ENCODE measurements at regions of chr7 and their contacts with region 1.

Region 1: GRCh38 chr7:37208528-37208927 is 240.1 kb downstream of the ELMO1 start:
- DNase-seq: peak in 1 of 2 donors; percentile 80
- ATAC-seq: peak; percentile 87 to 93 (median 90)
- H3K4me3 ChIP-seq: no peak overlapping the region
- H3K27ac ChIP-seq: peak overlapping the region; percentile 14 to 78 (median 58)
- H3K4me1 ChIP-seq: peaks cover 0 to 45% (median 28%) of the 10 kb centered on the region in 9 donors
- H3K27me3 ChIP-seq: no peaks in the 10 kb centered on the region
- CTCF ChIP-seq: peak; percentile 35 to 85 (median 68)

Region 2: GRCh38 chr7:37016064-37016878 is 192.3 kb before region 1 on chr7:
- intact Hi-C with region 1: no loop called
- DNase-seq: no peak
- ATAC-seq: no peak
- H3K4me3 ChIP-seq: no peak overlapping the region
- H3K27ac ChIP-seq: no peak overlapping the region
- H3K4me1 ChIP-seq: peaks cover 0 to 26% (median 6%) of the 10 kb centered on the region in 9 donors
- H3K27me3 ChIP-seq: no peaks in the 10 kb centered on the region
- CTCF ChIP-seq: no peak

Region 3: DNA sequence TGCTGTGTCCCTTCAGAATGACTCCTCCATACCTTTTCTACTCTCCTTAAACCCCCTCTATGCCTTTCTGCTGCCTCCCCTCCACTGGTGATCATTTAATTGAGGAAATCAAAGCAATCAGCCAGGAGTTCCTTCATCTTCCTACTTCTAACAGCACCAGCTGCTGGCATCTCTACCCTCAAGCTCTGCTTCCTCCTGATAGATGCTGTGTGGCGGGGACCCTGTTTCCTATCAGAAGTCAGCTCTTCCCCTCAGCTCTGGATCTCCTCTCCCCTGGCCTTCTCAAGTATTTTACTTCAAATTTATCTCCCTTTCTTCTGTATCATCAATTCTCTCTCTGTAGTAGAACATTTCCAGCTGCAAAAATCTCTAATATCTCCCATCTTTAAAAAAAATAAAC is 56.5 kb after region 1 on chr7:
- intact Hi-C with region 1: loop called in 1 of 10 experiments (anchors 10 kb)
- DNase-seq: no peak
- ATAC-seq: no peak
- H3K4me3 ChIP-seq: no peak overlapping the region
- H3K27ac ChIP-seq: no peak overlapping the region
- H3K4me1 ChIP-seq: peaks cover 0 to 35% (median 13%) of the 10 kb centered on the region in 9 donors
- H3K27me3 ChIP-seq: no peaks in the 10 kb centered on the region
- CTCF ChIP-seq: no peak

Region 4: DNA sequence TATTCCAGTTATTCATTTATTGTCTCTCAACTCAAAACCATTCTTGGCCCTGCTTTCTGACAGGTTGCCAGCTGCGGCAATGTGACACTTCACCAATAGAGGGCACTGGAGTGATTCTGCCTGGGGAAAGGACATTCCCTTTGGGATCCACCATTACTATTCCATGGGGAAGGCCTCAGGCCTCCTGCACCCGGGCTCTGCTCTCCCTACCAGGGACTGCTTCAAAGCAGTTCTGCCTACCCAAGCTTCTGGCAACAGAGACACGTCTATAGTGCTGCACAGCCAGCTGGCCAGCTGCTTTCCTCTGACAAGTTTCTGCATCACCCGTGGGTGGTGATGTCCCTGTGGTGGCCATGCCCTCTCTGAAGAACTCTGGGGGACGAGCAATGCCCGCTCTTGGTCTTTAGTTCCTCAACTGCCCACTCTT is 76.3 kb after region 1 on chr7:
- intact Hi-C with region 1: loop called in 2 of 10 experiments (anchors 5 kb)
- DNase-seq: peak; percentile 54 to 61
- ATAC-seq: peak in 6 of 8 donors; percentile 14 to 67 (median 52)
- H3K4me3 ChIP-seq: no peak overlapping the region
- H3K27ac ChIP-seq: peak overlapping the region in 7 of 10 donors; percentile 13 to 45 (median 19)
- H3K4me1 ChIP-seq: peaks cover 4 to 78% (median 56%) of the 10 kb centered on the region in 9 donors
- H3K27me3 ChIP-seq: no peaks in the 10 kb centered on the region
- CTCF ChIP-seq: peak; percentile 59 to 84 (median 77)

Region 5: DNA sequence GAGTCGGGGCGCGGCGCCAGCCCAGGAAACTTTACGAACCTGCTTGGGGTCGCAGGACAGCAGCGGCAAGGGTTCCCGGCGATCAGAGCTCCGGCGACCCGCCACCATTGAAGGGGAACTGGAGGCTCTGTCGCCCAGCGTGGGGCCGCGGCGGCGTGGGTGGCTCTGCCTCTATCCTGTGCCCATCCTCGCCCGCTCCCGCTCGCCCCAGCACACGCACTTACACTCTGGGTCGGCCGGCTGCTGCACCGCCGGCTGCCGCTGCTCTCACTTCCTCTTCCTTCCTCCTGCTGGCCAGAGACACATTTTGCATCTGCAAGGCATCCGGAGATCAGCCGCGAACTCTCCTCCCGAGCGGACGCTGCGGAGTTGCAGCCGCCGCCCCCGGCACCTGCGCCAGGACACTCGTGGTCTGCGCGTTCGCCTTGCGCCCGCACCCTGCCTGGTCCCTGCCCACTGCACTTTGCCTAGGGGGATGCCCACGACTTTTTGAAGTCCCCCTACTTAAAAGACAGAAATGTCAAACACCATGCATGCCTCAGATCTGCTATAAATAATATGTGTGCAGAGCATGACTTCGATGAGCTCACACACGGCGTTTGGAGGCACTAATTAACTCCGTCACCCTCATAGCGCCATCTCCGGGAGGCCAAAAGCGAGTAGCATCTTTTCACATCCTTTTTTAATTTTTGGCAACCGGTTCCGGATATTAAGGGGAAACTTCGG is 240.3 kb after region 1 on chr7 and contains the start of gene ELMO1:
- intact Hi-C with region 1: loop called in 4 of 10 experiments (anchors 5 to 10 kb)
- DNase-seq: peak; percentile 76 to 79
- ATAC-seq: peak; percentile 77 to 89 (median 85)
- H3K4me3 ChIP-seq: peak within 1 kb of the TSS; percentile 59 to 86 (median 78)
- H3K27ac ChIP-seq: peak within 1 kb of the TSS; percentile 82 to 98 (median 94)
- H3K4me1 ChIP-seq: peaks cover 0 to 47% (median 20%) of the 10 kb centered on the region in 9 donors
- H3K27me3 ChIP-seq: peaks cover 0 to 22% (median 0%) of the 10 kb centered on the region in 7 donors
- CTCF ChIP-seq: peak in 8 of 9 donors; percentile 20 to 63 (median 51)
- total RNA-seq, gene ELMO1: 8.8 to 18.0 (median 14.0) TPM

Region 6: DNA sequence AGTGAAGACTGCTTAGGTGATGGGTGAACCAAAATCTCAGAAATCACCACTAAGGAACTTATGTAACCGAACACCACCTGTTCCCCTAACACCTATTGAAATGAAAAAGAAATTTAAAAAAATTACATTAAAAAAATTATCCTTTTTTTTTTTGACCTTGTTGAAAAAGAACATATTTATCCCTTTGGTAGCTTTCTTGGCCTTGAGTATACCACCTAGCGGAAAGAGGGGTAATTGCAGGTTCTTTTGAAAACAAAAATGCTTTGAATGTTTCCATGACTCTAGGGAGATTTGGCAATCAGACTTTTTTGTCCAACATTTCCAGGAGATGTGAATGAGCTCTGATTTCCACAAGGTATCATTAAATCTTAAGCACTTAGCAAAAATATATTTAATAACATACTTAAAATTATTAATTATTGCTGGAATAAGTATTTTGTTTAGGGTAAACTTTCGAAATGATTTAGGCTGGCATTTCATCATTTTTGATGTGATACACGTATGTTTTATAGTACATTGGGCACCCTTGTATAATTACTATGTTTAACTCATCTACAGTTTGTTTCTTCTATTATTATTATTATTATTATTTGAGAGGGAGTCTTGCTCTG is 287.2 kb after region 1 on chr7:
- intact Hi-C with region 1: loop called in 8 of 10 experiments (anchors 5 to 10 kb)
- DNase-seq: no peak
- ATAC-seq: peak in 1 of 8 donors; percentile 37
- H3K4me3 ChIP-seq: no peak overlapping the region
- H3K27ac ChIP-seq: no peak overlapping the region
- H3K4me1 ChIP-seq: no peaks in the 10 kb centered on the region
- H3K27me3 ChIP-seq: no peaks in the 10 kb centered on the region
- CTCF ChIP-seq: peak; percentile 72 to 86 (median 78)

Region 7: DNA sequence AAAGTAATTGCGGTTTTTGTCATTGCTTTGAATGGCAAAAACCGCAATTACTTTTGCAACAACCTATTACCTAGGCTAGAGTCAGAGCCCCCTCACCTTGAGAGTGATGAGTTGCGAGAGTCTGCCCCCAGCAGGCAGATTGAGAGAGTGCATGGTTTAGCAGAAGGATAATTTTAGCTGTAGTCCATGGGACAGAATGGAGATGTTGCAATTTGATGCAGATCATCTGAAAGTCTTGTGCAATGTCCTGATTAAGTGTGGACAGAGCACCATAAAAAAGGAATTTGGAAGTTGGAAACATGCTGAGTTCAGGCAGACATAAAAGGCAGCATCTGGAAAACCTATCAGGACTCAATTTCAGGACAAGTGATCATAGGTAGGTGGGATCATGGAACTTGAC is 523.7 kb after region 1 on chr7:
- intact Hi-C with region 1: loop called in 1 of 10 experiments (anchors 10 kb)
- DNase-seq: peak; percentile 18 to 32
- ATAC-seq: peak; percentile 23 to 86 (median 70)
- H3K4me3 ChIP-seq: no peak overlapping the region
- H3K27ac ChIP-seq: peak overlapping the region in 1 of 10 donors; percentile 4
- H3K4me1 ChIP-seq: peaks cover 0 to 33% (median 13%) of the 10 kb centered on the region in 9 donors
- H3K27me3 ChIP-seq: no peaks in the 10 kb centered on the region
- CTCF ChIP-seq: peak in 8 of 9 donors; percentile 17 to 66 (median 50)

Region 8: GRCh38 chr7:37833107-37833817 is 624.7 kb after region 1 on chr7:
- intact Hi-C with region 1: loop called in 8 of 10 experiments (anchors 2 to 10 kb)
- DNase-seq: peak; percentile 17 to 19
- ATAC-seq: peak in 3 of 8 donors; percentile 33 to 61 (median 40)
- H3K4me3 ChIP-seq: peak overlapping the region in 7 of 10 donors; percentile 7 to 48 (median 40)
- H3K27ac ChIP-seq: no peak overlapping the region
- H3K4me1 ChIP-seq: peaks cover 0 to 18% (median 5%) of the 10 kb centered on the region in 9 donors
- H3K27me3 ChIP-seq: peaks cover 0 to 7% (median 0%) of the 10 kb centered on the region in 7 donors
- CTCF ChIP-seq: peak; percentile 66 to 86 (median 76)

Measured in heart right ventricle (tissue), 16 donors.